Posterior vena cava (tissue), 2 donors: ENCODE measurements at regions of chr9 and their contacts with region 1.

Region 1: DNA sequence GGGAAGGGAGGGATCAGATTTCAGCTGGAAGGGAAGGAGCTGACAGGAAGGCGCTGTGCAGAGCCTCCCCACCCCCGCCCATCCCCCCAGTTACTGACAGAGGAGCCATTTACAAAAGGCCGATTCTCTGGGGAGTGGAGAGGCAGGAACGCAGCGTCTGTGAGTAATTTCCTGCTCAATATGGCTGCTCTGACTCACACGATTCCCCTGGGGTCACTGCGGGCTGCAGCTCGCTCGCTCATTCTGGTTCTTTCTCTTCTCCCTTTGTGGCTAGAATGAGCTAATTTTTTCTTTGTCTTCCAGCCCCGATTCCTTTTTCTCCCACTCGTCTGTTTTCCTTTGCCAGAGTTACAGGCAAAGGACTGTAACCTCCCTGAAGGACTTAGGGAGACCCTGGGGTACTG is 28.8 kb downstream of the PTPA start:
- DNase-seq: peak; percentile 97

Region 2: DNA sequence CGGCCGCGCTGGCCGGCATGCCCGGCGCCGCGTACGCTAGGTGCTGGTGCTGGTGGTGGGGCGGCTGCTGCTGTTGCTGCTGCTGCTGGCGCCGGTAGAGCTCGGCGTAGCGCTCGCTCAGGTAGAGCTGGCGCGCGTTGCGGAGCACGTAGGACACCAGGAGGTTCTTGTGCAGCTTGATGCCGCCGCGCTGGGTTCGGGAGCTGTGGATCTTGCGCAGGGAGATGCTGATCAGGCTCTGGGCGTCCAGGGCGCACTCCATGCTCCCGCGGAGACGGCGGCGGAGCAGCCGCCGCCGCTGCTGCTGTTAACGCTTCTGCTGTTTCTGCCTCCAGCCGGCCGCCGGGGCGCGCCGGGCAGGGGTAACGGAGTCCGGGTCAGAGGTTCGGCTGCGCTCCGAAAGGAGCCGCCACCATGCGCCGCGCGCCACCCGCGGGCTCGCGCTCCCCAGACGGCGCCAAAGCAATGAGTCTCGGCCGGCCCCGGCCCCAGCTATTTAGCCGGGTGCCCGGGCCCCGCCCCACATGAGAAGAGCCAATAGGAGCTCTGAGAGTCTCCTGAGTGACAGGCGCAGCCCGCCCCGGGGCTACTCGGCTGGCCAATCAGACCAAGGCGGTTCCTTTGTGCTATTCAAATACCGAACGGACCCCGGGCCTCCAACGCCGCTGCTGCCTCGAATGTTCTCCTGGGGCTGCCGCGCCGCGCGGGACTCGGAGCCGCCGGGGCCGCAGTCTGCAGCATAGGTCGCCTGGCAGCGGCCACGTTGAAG is 38.0 kb after region 1 on chr9 and contains the start of gene IER5L:
- intact Hi-C with region 1: loop called in 1 of 2 experiments (anchors 5 kb)
- DNase-seq: peak; percentile 99
- total RNA-seq, gene IER5L: 23.5 to 35.0 TPM

Region 3: GRCh38 chr9:129413537-129414376 is 273.8 kb after region 1 on chr9:
- intact Hi-C with region 1: loop called in 1 of 2 experiments (anchors 5 kb)
- DNase-seq: peak; percentile 100

Region 4: GRCh38 chr9:129495534-129496325 is 355.7 kb after region 1 on chr9:
- intact Hi-C with region 1: loop called (anchors 5 to 10 kb)
- DNase-seq: peak; percentile 98

Region 5: GRCh38 chr9:129610473-129611301 is 470.7 kb after region 1 on chr9:
- intact Hi-C with region 1: loop called in 1 of 2 experiments (anchors 1 kb)
- DNase-seq: peak; percentile 93

Region 6: GRCh38 chr9:129783516-129784361 is 643.7 kb after region 1 on chr9:
- intact Hi-C with region 1: loop called in 1 of 2 experiments (anchors 10 kb)
- DNase-seq: peak; percentile 87